T-cell (primary cell): ENCODE measurements at regions of chr17 and their contacts with region 1.

Region 1: DNA sequence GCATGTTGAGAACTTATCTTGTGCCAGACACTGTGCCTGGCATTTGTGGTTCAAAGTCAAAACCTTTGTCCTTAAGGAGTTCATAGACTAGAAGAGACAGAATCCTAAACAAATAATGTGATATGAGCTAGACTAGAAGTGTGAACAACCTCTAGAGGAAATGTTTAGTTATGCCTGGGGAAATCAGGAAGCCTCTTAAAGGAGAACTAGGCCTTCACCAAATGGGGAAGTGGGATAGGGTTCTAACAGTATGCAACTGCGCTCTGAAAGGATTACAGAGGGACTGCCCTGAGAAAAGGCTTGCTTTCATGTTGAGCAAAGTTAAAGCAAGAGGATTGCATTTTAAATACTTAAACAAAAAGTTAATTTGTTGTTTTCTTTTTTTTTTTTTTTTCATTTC is 4.9 kb downstream of the RUNDC1 start:
- DNase-seq: no peak
- ATAC-seq: no peak
- H3K4me3 ChIP-seq: no peak overlapping the region
- H3K4me3 Mint-ChIP-seq: no peak overlapping the region
- H3K27ac ChIP-seq: no peak overlapping the region
- H3K27ac Mint-ChIP-seq: no peak overlapping the region
- H3K4me1 ChIP-seq: peaks cover 11 to 15% of the 10 kb centered on the region in 2 experiments
- H3K4me1 Mint-ChIP-seq: peaks cover 25 to 33% (median 31%) of the 10 kb centered on the region in 3 donors
- H3K27me3 ChIP-seq: no peaks in the 10 kb centered on the region
- H3K27me3 Mint-ChIP-seq: no peaks in the 10 kb centered on the region

Region 2: GRCh38 chr17:43006639-43007551 is 21.7 kb after region 1 on chr17 and contains the start of gene IFI35:
- CTCF ChIA-PET with region 1: no interaction called
- POLR2A ChIA-PET with region 1: interaction called, 4 to 15 read pairs
- DNase-seq: peak; percentile 68 to 90 (median 81)
- ATAC-seq: peak; percentile 98 to 99 (median 99)
- H3K4me3 ChIP-seq: peak within 1 kb of the TSS; percentile 88
- H3K4me3 Mint-ChIP-seq: peak within 1 kb of the TSS; percentile 92 to 99 (median 99)
- H3K27ac ChIP-seq: peak within 1 kb of the TSS; percentile 80
- H3K27ac Mint-ChIP-seq: peak within 1 kb of the TSS; percentile 100
- H3K4me1 ChIP-seq: peaks cover 2 to 30% of the 10 kb centered on the region in 2 experiments
- H3K4me1 Mint-ChIP-seq: peaks cover 18 to 25% (median 23%) of the 10 kb centered on the region in 3 donors
- H3K27me3 ChIP-seq: no peaks in the 10 kb centered on the region
- H3K27me3 Mint-ChIP-seq: no peaks in the 10 kb centered on the region
- total RNA-seq, gene IFI35: 27.0 to 44.6 (median 34.1) TPM